ENCODE measurements at regions of chr1 and their contacts with region 1.

Region 1: GRCh38 chr1:165597883-165598675 is 33.0 kb upstream of the MGST3 start:
- DNase-seq: peak; percentile 99
- H3K4me3 ChIP-seq: peak overlapping the region; percentile 4 to 62 (median 58)
- H3K27ac ChIP-seq: peak overlapping the region; percentile 87
- H3K4me1 ChIP-seq: peaks cover 10% of the 10 kb centered on the region
- H3K27me3 ChIP-seq: peaks cover 11 to 19% of the 10 kb centered on the region in 2 experiments
- CTCF ChIP-seq: no peak
- POLR2A ChIP-seq: no peak

Region 2: DNA sequence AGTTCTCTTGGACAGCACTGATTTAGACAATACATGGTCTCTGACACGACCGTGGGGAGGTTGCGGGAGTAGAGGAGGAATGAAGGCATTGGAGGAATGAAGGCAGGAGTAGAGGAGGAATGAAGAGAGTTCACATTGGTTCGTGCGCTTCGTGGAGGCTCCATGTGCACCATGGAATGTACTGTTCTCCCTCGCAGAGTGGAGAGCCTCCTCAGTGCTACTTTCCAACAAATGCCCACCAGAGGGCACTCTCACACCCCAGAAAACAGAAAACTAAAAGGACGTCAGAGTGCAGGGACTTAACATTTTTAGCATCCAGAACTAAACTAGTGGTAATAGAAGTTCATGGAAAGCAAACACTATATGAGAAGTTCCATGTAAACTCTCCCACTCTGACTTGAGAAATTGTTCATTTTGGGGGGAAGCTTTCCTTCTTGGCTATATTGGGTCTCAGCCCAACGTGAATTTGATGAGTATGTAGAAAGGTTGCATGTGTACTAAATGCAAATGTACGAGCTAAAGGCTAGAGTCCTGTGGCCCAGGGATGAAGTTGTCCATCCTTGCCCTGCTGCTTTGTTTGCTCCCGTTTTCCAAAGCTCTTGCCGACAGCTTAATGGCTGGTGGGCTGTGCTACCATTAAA is 453.2 kb before region 1 on chr1:
- CTCF ChIA-PET with region 1: interaction called, 6 read pairs
- POLR2A ChIA-PET with region 1: no interaction called
- dilution Hi-C with region 1: no loop called
- intact Hi-C with region 1: loop called (anchors 1 kb)
- DNase-seq: peak; percentile 49
- H3K4me3 ChIP-seq: no peak overlapping the region
- H3K27ac ChIP-seq: no peak overlapping the region
- H3K4me1 ChIP-seq: no peaks in the 10 kb centered on the region
- H3K27me3 ChIP-seq: no peaks in the 10 kb centered on the region
- CTCF ChIP-seq: peak; percentile 71 to 76
- POLR2A ChIP-seq: no peak

Region 3: GRCh38 chr1:165376041-165376810 is 221.9 kb before region 1 on chr1:
- CTCF ChIA-PET with region 1: interaction called, 24 read pairs
- POLR2A ChIA-PET with region 1: no interaction called
- dilution Hi-C with region 1: no loop called
- intact Hi-C with region 1: no loop called
- DNase-seq: peak; percentile 81
- H3K4me3 ChIP-seq: peak overlapping the region; percentile 19 to 60 (median 24)
- H3K27ac ChIP-seq: no peak overlapping the region
- H3K4me1 ChIP-seq: peaks cover 9% of the 10 kb centered on the region
- H3K27me3 ChIP-seq: peaks cover 0 to 5% of the 10 kb centered on the region in 2 experiments
- CTCF ChIP-seq: no peak
- POLR2A ChIP-seq: no peak

Region 4: DNA sequence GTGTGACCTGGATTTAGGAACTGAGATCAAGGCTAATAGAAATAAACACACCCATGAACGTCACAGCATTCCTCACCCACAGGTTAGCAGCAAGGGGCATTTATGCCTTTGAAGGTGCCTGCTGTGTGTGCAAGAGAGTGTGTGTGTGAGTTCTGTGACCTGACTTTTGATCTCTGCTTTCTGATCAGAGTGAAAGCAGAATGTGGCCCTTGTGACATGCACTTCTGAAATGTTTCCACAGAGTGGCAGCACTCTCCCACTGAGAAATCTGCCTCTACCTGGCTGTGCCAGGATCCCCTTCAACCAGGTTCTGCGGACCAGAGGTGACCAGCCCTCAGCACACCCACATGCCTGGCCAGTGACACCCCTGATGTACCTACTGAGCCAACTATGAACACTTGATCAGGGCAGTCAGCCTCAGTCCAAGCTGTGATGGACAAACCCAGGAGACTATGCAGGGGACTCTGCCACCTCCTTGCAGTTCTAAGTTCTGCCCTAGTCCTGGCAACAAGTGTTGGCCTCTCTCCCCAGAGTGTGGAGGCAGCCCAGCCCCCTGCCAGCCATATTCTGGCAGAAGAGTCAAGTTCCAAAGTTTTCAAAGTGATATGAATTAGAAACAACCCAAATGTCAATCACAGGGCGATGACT is 194.1 kb before region 1 on chr1:
- CTCF ChIA-PET with region 1: interaction called, 376 read pairs
- POLR2A ChIA-PET with region 1: no interaction called
- dilution Hi-C with region 1: no loop called
- intact Hi-C with region 1: loop called (anchors 1 kb)
- DNase-seq: peak; percentile 15
- H3K4me3 ChIP-seq: no peak overlapping the region
- H3K27ac ChIP-seq: no peak overlapping the region
- H3K4me1 ChIP-seq: no peaks in the 10 kb centered on the region
- H3K27me3 ChIP-seq: peaks cover 0 to 2% of the 10 kb centered on the region in 2 experiments
- CTCF ChIP-seq: peak; percentile 32 to 61
- POLR2A ChIP-seq: no peak

Region 5: GRCh38 chr1:165717918-165718515 is 119.9 kb after region 1 on chr1:
- CTCF ChIA-PET with region 1: interaction called, 3 read pairs
- POLR2A ChIA-PET with region 1: no interaction called
- dilution Hi-C with region 1: no loop called
- intact Hi-C with region 1: loop called (anchors 1 kb)
- DNase-seq: peak; percentile 68
- H3K4me3 ChIP-seq: no peak overlapping the region
- H3K27ac ChIP-seq: no peak overlapping the region
- H3K4me1 ChIP-seq: no peaks in the 10 kb centered on the region
- H3K27me3 ChIP-seq: no peaks in the 10 kb centered on the region
- CTCF ChIP-seq: peak; percentile 52 to 70
- POLR2A ChIP-seq: no peak

Region 6: DNA sequence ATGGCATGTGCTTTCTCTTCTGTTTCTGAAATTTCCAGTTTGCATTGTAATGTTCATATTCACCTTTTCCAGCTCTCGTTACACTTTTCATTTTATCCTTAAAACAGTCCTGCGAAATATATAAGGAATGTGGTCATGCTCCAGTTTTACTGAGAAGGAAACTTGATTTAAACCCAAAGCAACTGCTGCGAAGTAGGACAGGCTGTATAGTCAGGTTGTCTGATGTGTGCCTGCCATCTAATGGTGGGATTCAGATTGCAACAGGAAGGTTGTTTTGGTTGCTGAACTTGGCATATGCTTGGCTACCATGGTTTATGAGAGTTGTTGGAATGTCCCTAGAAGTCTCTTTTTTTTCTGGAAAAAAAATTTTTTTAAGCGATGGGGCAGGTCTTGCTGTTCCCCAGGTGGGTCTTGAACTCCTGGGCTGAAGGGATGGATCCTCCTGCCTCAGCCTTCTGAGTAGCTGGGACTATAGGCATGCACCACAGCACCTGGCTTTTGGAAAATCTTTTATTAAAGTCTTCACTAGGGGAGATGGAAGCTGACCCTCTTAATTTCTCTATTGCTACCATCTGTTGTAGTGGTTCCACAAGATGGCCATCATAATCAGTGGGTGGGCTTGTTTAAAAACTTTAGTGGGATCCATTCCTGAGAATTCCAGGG is 316.2 kb after region 1 on chr1:
- CTCF ChIA-PET with region 1: interaction called, 71 read pairs
- POLR2A ChIA-PET with region 1: no interaction called
- dilution Hi-C with region 1: no loop called
- intact Hi-C with region 1: loop called (anchors 1 kb)
- DNase-seq: peak; percentile 86
- H3K4me3 ChIP-seq: no peak overlapping the region
- H3K27ac ChIP-seq: no peak overlapping the region
- H3K4me1 ChIP-seq: peaks cover 18% of the 10 kb centered on the region
- H3K27me3 ChIP-seq: no peaks in the 10 kb centered on the region
- CTCF ChIP-seq: peak; percentile 81 to 82
- POLR2A ChIP-seq: no peak

Region 7: GRCh38 chr1:166479052-166479631 is 881.1 kb after region 1 on chr1:
- CTCF ChIA-PET with region 1: interaction called, 21 read pairs
- POLR2A ChIA-PET with region 1: no interaction called
- dilution Hi-C with region 1: no loop called
- intact Hi-C with region 1: loop called (anchors 2 kb)
- DNase-seq: peak; percentile 53
- H3K4me3 ChIP-seq: no peak overlapping the region
- H3K27ac ChIP-seq: no peak overlapping the region
- H3K4me1 ChIP-seq: no peaks in the 10 kb centered on the region
- H3K27me3 ChIP-seq: no peaks in the 10 kb centered on the region
- CTCF ChIP-seq: peak; percentile 53 to 59
- POLR2A ChIP-seq: no peak

Measured in endothelial cell of umbilical vein (primary cell).